Activated T-helper 2 cell treated with anti-CD3 and anti-CD28 coated beads, Interferon-gamma antibody, Interleukin-2, Interleukin-4, amounts not matched to agents 10 μg/mL and 5 μg/mL and 100 μg/mL, durations not matched to agents 14 hours and 24 hours and 36 hours (primary cell): ENCODE measurements at regions of chr11 and their contacts with region 1.

Region 1: DNA sequence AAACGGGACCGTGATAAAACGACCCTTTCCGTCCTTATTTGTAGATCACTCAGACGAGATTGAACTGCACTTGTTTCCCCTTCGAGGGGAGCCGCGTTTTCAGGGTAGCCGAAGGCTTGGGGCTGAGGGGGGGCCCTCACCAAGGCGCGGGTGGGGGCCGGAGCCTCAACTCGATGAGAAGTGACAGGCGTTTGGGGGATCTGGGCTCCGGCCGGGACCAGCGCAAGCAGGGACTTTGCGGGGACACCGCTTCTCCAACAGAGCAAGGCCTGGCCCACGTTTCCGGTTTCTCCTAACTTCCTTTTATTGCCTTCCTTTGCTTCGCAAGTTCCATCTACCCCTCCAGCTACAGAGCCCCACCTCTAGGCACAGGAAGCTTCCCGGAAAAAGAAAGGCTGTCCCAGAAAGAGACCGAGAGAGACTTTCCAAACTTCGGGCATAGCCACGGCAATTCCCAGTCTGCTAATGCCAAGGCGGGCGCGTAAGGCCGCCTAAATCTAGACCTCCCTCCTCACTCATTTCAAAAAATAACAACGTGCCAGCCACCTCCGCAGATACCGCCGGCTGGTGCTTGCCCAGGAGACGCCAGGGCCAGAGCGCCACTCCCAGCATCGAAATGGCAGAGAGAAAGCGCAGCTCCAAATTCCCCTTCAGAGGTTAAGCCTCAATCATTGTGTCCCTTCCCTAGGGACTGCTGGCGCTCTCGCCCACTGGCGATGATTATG is 6.6 kb downstream of the PAX6 start:
- DNase-seq: no peak
- H3K4me3 Mint-ChIP-seq: no peak overlapping the region
- H3K27ac Mint-ChIP-seq: no peak overlapping the region
- H3K4me1 Mint-ChIP-seq: peaks cover 9% of the 10 kb centered on the region
- H3K27me3 Mint-ChIP-seq: peaks cover 86% of the 10 kb centered on the region

Region 2: GRCh38 chr11:31817621-31818424 is 13.3 kb after region 1 on chr11:
- intact Hi-C with region 1: loop called (anchors 1 kb)
- DNase-seq: no peak
- H3K4me3 Mint-ChIP-seq: no peak overlapping the region
- H3K27ac Mint-ChIP-seq: no peak overlapping the region
- H3K4me1 Mint-ChIP-seq: no peaks in the 10 kb centered on the region
- H3K27me3 Mint-ChIP-seq: peaks cover 73% of the 10 kb centered on the region

Region 3: GRCh38 chr11:31887180-31887579 is 82.7 kb after region 1 on chr11:
- intact Hi-C with region 1: no loop called
- DNase-seq: no peak
- H3K4me3 Mint-ChIP-seq: no peak overlapping the region
- H3K27ac Mint-ChIP-seq: no peak overlapping the region
- H3K4me1 Mint-ChIP-seq: no peaks in the 10 kb centered on the region
- H3K27me3 Mint-ChIP-seq: no peaks in the 10 kb centered on the region

Region 4: DNA sequence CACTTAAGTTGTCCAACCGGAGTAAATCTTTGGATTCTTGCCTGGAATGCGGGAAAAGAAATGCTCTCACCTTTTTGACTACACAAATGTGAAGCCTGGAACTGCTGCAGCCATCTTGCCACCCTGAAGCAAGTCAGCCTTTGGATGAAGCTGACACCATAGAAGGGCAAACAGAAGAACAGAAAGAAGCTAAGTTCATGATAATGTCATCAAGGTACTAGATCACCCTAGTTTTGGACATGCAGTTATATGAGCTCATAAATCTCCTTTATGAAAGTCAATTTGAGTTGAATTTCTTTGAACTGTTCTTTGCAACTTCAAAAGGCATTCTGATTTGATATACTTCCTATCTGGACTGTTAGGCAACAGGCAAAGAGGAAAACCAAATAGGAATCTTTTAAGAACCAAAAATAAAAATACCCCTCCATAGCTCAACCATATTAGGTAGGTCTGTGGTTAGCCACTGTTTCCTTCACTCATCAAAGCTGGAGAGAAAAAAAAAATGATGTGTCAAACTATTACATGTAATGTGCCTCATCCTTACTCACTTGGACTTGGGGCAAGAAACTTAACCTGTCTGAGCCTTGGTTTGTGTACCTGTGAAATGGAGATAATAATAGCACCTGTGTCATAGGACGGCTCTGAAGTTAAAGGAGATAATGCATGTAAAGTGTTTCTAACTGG is 539.0 kb after region 1 on chr11:
- intact Hi-C with region 1: no loop called
- DNase-seq: no peak
- H3K4me3 Mint-ChIP-seq: no peak overlapping the region
- H3K27ac Mint-ChIP-seq: no peak overlapping the region
- H3K4me1 Mint-ChIP-seq: peaks cover 5% of the 10 kb centered on the region
- H3K27me3 Mint-ChIP-seq: peaks cover 15% of the 10 kb centered on the region